ENCODE measurements at regions of chr7 and their contacts with region 1.

Region 1: GRCh38 chr7:17063045-17063383 is 181.2 kb upstream of the AGR3 start:
- DNase-seq: no peak
- H3K4me3 Mint-ChIP-seq: no peak overlapping the region
- H3K27ac Mint-ChIP-seq: no peak overlapping the region
- H3K4me1 Mint-ChIP-seq: peaks cover 24% of the 10 kb centered on the region
- H3K27me3 Mint-ChIP-seq: no peaks in the 10 kb centered on the region

Region 2: DNA sequence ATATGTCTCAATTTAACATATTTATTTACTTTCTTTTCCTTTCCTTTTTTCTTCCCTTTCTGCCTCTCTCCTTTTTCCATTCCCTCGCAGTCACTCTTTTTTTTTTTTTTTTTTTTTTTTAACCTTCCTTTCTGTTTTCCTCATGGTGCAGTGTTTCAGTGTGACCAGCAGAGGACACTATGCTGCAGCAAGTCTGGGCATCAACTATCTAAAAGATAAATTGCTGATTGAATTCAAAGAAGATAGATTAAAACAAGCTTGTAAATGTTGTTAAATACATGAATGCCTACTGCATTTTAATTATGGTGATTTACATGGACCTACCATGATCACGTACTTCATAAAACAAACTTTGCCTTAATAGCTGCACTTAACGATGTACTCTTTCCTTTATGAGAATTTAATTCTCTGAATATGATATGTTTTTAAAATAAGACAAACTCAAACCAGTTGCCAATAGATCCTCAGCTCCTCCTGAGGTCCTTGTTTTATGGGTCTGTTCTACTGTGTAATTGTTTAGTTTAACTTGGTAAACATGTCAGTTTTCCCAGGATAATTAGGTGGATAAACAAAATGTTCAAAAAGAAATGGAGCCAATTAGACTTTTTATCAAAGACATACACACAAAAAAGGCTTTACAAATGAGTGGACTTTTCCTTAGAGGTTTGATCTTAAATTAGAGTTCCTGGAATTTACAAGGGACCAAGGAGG is 80.2 kb before region 1 on chr7:
- intact Hi-C with region 1: loop called (anchors 5 kb)
- DNase-seq: no peak
- H3K4me3 Mint-ChIP-seq: peak overlapping the region; percentile 51
- H3K27ac Mint-ChIP-seq: no peak overlapping the region
- H3K4me1 Mint-ChIP-seq: peaks cover 17% of the 10 kb centered on the region
- H3K27me3 Mint-ChIP-seq: peaks cover 49% of the 10 kb centered on the region

Region 3: DNA sequence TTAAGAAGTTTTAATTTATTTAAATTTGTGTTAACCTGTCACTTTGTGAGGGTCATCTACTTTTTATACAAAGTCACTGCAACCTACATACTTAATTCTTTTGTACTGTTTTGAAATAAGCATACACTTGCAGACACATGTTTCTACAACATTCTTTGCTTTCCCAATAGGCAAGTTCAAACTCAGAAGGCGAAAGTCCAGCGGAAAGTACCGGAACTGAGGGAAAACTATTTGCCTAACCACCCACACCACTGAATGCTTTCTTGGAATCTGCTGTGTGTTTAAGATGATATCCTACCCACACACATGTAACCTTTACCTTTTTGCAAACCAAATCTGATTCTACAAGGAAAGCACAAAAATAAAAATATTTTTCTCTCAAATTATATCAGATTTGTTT is 41.8 kb before region 1 on chr7:
- intact Hi-C with region 1: loop called (anchors 5 kb)
- DNase-seq: no peak
- H3K4me3 Mint-ChIP-seq: no peak overlapping the region
- H3K27ac Mint-ChIP-seq: no peak overlapping the region
- H3K4me1 Mint-ChIP-seq: peaks cover 21% of the 10 kb centered on the region
- H3K27me3 Mint-ChIP-seq: peaks cover 3% of the 10 kb centered on the region

Region 4: GRCh38 chr7:17041324-17041723 is 21.7 kb before region 1 on chr7:
- intact Hi-C with region 1: loop called (anchors 2 kb)
- DNase-seq: no peak
- H3K4me3 Mint-ChIP-seq: peak overlapping the region; percentile 13
- H3K27ac Mint-ChIP-seq: peak overlapping the region; percentile 57
- H3K4me1 Mint-ChIP-seq: peaks cover 53% of the 10 kb centered on the region
- H3K27me3 Mint-ChIP-seq: peaks cover 2% of the 10 kb centered on the region

Region 5: DNA sequence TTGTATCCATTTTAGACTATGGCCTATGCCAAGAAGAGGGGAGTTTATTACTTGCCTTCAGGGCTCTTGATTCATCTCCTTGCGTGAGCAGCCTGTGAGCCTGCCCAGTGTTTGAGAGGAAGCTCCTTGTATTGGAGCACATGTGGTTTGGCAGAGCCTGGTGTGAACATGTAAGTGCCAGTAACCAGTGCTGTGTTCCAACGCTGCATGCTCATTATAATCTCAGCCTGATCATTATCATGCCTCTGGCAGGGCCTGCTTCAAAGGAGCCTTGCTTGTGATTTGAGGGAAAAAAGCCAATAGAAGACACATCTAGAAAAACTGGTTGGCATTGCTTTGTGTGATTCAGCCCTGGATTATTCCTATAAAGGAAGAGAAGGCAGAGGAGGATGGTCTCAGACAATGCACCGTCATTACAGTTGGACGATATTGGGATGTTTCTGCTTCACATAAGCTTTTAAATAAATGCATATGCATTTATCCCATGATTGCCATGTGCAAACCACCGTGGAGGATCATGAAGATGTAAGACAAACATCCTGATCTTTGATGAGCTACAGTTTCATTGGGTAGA is 32.1 kb after region 1 on chr7:
- intact Hi-C with region 1: loop called (anchors 5 kb)
- DNase-seq: no peak
- H3K4me3 Mint-ChIP-seq: no peak overlapping the region
- H3K27ac Mint-ChIP-seq: no peak overlapping the region
- H3K4me1 Mint-ChIP-seq: no peaks in the 10 kb centered on the region
- H3K27me3 Mint-ChIP-seq: no peaks in the 10 kb centered on the region

Region 6: DNA sequence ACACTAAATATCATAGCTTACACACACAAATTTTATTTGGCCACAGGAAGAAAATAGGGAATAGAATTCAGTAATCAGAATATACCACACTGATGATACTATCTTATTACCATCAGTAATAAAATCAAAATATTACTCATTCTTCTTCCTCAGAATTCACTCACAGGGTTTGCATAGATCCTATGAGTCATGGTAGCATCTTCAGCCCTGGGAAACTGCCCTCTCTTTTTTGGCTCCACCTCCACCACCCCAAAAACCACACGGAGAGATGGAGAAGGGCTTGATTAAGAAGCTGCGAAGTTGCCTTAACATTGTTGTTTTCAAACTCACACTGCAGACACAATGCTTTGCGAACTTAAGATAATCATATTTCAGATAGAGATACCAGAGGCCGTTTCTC is 81.3 kb after region 1 on chr7:
- intact Hi-C with region 1: loop called (anchors 5 kb)
- DNase-seq: peak; percentile 70
- H3K4me3 Mint-ChIP-seq: peak overlapping the region; percentile 16
- H3K27ac Mint-ChIP-seq: peak overlapping the region; percentile 71
- H3K4me1 Mint-ChIP-seq: peaks cover 63% of the 10 kb centered on the region
- H3K27me3 Mint-ChIP-seq: no peaks in the 10 kb centered on the region